Tibial artery (tissue), 4 donors: ENCODE measurements at regions of chr17 and their contacts with region 1.

Region 1: DNA sequence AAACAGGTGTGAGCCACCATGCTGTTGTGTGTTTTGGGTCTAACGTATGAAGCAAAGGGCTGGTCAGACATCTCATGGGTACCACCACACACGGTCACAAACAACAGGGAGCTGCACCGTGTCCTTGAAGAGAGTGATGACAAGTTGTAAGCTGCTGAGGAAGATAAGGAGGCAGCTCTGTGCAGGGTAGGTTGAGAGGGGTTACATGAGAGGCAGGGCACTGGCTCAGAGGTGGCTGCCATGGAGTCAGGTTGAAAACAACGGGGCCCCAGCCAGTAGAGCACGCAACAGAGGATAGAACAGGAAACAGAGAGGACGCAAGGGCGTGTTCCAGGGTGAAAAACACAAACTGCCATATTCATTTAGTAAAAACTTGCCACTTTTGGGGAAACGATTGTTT is 52.2 kb downstream of the TRARG1 start:
- DNase-seq: no peak
- H3K4me3 ChIP-seq: no peak overlapping the region
- H3K27ac ChIP-seq: no peak overlapping the region
- H3K4me1 ChIP-seq: peaks cover 0 to 24% (median 0%) of the 10 kb centered on the region in 4 donors
- H3K27me3 ChIP-seq: no peaks in the 10 kb centered on the region
- CTCF ChIP-seq: no peak

Region 2: GRCh38 chr17:1275962-1276736 is 55.6 kb before region 1 on chr17:
- intact Hi-C with region 1: loop called (anchors 1 kb)
- DNase-seq: peak; percentile 56 to 75
- H3K4me3 ChIP-seq: no peak overlapping the region
- H3K27ac ChIP-seq: no peak overlapping the region
- H3K4me1 ChIP-seq: peaks cover 0 to 32% (median 12%) of the 10 kb centered on the region in 4 donors
- H3K27me3 ChIP-seq: peaks cover 1 to 16% of the 10 kb centered on the region in 2 donors
- CTCF ChIP-seq: peak; percentile 83 to 89

Region 3: GRCh38 chr17:1606352-1607033 is 274.8 kb after region 1 on chr17:
- intact Hi-C with region 1: no loop called
- DNase-seq: no peak
- H3K4me3 ChIP-seq: no peak overlapping the region
- H3K27ac ChIP-seq: no peak overlapping the region
- H3K4me1 ChIP-seq: no peaks in the 10 kb centered on the region
- H3K27me3 ChIP-seq: no peaks in the 10 kb centered on the region
- CTCF ChIP-seq: no peak